Naive thymus-derived CD4-positive, alpha-beta T cell (primary cell): ENCODE measurements at regions of chr11 and their contacts with region 1.

Region 1: DNA sequence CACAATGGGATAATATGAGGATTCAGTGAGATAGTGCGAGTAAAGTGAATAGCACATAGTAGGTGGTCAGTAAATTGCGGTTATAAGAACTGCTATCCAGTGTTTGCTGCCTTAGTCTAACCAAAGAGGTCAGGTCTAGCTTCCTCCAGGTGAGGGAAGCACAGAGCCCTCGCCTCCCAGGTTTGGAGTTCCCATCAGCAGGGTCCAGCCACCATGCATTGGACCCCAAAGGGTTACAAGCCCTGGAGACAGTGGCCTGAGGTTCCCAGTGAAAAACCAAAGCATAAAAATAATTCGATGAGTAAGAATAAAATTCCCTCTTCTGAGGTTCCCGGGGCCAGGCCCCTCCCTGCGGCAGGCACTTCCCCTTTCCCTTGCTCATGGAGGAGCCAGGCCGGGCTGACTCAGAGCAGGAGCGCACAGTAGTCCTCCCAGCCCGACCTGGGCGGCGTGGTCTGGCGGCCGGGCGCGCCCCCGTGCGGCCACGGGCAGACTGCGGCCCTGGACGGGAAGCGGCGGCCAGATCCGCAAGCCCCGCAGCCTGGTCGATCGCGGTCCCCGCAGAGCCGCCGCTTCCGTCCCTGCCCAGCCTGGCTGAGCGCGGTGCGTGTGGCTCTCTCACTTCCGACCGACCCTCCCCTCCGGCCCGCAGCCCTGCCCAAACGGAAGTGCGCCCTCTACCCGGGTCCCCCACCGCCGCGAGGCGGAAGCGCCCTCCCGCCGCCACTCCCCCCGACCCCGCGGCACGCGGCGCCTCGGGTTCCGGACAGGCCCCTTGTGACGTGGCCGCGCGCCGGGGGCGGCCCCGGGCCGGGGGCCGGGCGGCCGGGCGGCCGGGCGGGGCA is at the start of gene SLC39A13:
- DNase-seq: peak; percentile 80 to 99 (median 88)
- ATAC-seq: peak; percentile 91
- H3K4me3 ChIP-seq: peak within 1 kb of the TSS; percentile 71
- H3K4me3 Mint-ChIP-seq: peak within 1 kb of the TSS; percentile 87 to 99 (median 91)
- H3K27ac ChIP-seq: peak within 1 kb of the TSS; percentile 83
- H3K27ac Mint-ChIP-seq: peak within 1 kb of the TSS; percentile 90 to 98 (median 94)
- H3K4me1 ChIP-seq: peaks cover 8 to 13% of the 10 kb centered on the region in 2 donors
- H3K4me1 Mint-ChIP-seq: peaks cover 4 to 23% (median 21%) of the 10 kb centered on the region in 7 donors
- H3K27me3 ChIP-seq: no peaks in the 10 kb centered on the region
- H3K27me3 Mint-ChIP-seq: no peaks in the 10 kb centered on the region
- total RNA-seq, gene SLC39A13: 29.9 to 60.4 (median 45.1) TPM

Region 2: GRCh38 chr11:46826310-46827044 is 581.5 kb before region 1 on chr11:
- CTCF ChIA-PET with region 1: no interaction called
- POLR2A ChIA-PET with region 1: no interaction called
- intact Hi-C with region 1: loop called in 1 of 2 experiments (anchors 5 kb)
- DNase-seq: peak; percentile 48 to 72 (median 67)
- ATAC-seq: peak; percentile 100
- H3K4me3 ChIP-seq: peak overlapping the region; percentile 45
- H3K4me3 Mint-ChIP-seq: peak overlapping the region; percentile 77 to 90 (median 83)
- H3K27ac ChIP-seq: peak overlapping the region; percentile 1
- H3K27ac Mint-ChIP-seq: peak overlapping the region in 5 of 9 donors; percentile 43 to 83 (median 64)
- H3K4me1 ChIP-seq: peaks cover 10 to 11% of the 10 kb centered on the region in 2 donors
- H3K4me1 Mint-ChIP-seq: peaks cover 12 to 49% (median 37%) of the 10 kb centered on the region in 7 donors
- H3K27me3 ChIP-seq: no peaks in the 10 kb centered on the region
- H3K27me3 Mint-ChIP-seq: no peaks in the 10 kb centered on the region

Region 3: DNA sequence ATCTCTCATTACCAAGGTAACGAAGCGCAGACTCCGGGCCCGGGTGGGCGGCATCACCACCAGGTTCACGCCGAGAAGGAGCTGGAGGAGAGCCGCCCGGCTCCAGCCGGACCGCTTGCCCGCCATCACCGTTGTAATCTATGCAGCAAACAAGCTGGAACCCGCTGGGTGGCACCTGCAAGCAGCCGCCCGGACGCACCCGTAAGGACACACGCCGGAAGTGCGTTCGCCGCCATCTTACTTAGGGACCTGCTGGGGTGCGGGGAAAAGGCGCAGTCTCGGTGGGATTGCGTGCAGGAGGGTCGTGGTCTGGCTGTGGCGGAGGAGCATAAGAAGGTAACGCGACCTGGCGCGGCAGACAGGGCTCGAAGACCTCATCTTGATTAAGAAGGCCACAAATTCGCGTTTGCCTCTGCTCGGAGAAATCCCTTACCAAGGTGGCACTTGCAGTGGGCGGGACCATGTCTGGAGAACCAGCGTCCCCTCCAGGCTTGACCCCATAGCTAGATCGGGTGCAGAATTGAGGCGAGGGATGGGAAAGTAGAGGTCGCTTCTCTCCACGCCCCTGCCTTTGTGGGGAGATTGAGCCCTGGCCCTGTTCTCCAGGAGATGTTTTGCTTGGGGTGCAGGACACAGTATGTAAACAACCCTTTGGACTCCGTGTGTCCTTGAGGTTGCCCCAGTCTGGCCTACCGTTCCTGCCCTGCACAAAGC is 159.1 kb before region 1 on chr11 and contains the start of gene ACP2:
- CTCF ChIA-PET with region 1: no interaction called
- POLR2A ChIA-PET with region 1: interaction called, 3 read pairs
- intact Hi-C with region 1: loop called in 1 of 2 experiments (anchors 1 kb)
- DNase-seq: peak; percentile 83 to 91 (median 86)
- ATAC-seq: peak; percentile 99
- H3K4me3 ChIP-seq: peak within 1 kb of the TSS; percentile 93
- H3K4me3 Mint-ChIP-seq: peak within 1 kb of the TSS; percentile 93 to 100 (median 98)
- H3K27ac ChIP-seq: peak within 1 kb of the TSS; percentile 87
- H3K27ac Mint-ChIP-seq: peak within 1 kb of the TSS; percentile 94 to 100 (median 98)
- H3K4me1 ChIP-seq: peaks cover 11 to 15% of the 10 kb centered on the region in 2 donors
- H3K4me1 Mint-ChIP-seq: peaks cover 13 to 39% (median 29%) of the 10 kb centered on the region in 7 donors
- H3K27me3 ChIP-seq: no peaks in the 10 kb centered on the region
- H3K27me3 Mint-ChIP-seq: no peaks in the 10 kb centered on the region
- total RNA-seq, gene ACP2: 17.6 to 38.1 (median 24.3) TPM

Region 4: GRCh38 chr11:47373876-47374720 is 33.9 kb before region 1 on chr11:
- CTCF ChIA-PET with region 1: interaction called, 140 read pairs
- POLR2A ChIA-PET with region 1: interaction called, 40 read pairs
- intact Hi-C with region 1: loop called (anchors 1 kb)
- DNase-seq: peak; percentile 69 to 91 (median 82)
- ATAC-seq: peak; percentile 84
- H3K4me3 ChIP-seq: no peak overlapping the region
- H3K4me3 Mint-ChIP-seq: peak overlapping the region in 1 of 10 donors; percentile 51
- H3K27ac ChIP-seq: no peak overlapping the region
- H3K27ac Mint-ChIP-seq: peak overlapping the region in 3 of 9 donors; percentile 48 to 72 (median 65)
- H3K4me1 ChIP-seq: peaks cover 0 to 3% of the 10 kb centered on the region in 2 donors
- H3K4me1 Mint-ChIP-seq: peaks cover 5 to 18% (median 9%) of the 10 kb centered on the region in 7 donors
- H3K27me3 ChIP-seq: no peaks in the 10 kb centered on the region
- H3K27me3 Mint-ChIP-seq: no peaks in the 10 kb centered on the region

Region 5: GRCh38 chr11:47454180-47454644 is 46.2 kb after region 1 on chr11:
- CTCF ChIA-PET with region 1: interaction called, 5 read pairs
- POLR2A ChIA-PET with region 1: no interaction called
- intact Hi-C with region 1: loop called in 1 of 2 experiments (anchors 1 kb)
- DNase-seq: peak in 8 of 9 donors; percentile 51 to 76 (median 68)
- ATAC-seq: peak; percentile 99
- H3K4me3 ChIP-seq: no peak overlapping the region
- H3K4me3 Mint-ChIP-seq: peak overlapping the region in 1 of 10 donors; percentile 41
- H3K27ac ChIP-seq: no peak overlapping the region
- H3K27ac Mint-ChIP-seq: peak overlapping the region in 6 of 9 donors; percentile 16 to 49 (median 44)
- H3K4me1 ChIP-seq: no peaks in the 10 kb centered on the region
- H3K4me1 Mint-ChIP-seq: peaks cover 0 to 7% (median 4%) of the 10 kb centered on the region in 7 donors
- H3K27me3 ChIP-seq: no peaks in the 10 kb centered on the region
- H3K27me3 Mint-ChIP-seq: no peaks in the 10 kb centered on the region

Region 6: GRCh38 chr11:47538741-47539574 is 131.0 kb after region 1 on chr11:
- CTCF ChIA-PET with region 1: no interaction called
- POLR2A ChIA-PET with region 1: no interaction called
- intact Hi-C with region 1: no loop called
- DNase-seq: no peak
- ATAC-seq: no peak
- H3K4me3 ChIP-seq: no peak overlapping the region
- H3K4me3 Mint-ChIP-seq: peak overlapping the region in 7 of 10 donors; percentile 6 to 77 (median 40)
- H3K27ac ChIP-seq: no peak overlapping the region
- H3K27ac Mint-ChIP-seq: peak overlapping the region in 8 of 9 donors; percentile 40 to 78 (median 54)
- H3K4me1 ChIP-seq: peaks cover 19 to 32% of the 10 kb centered on the region in 2 donors
- H3K4me1 Mint-ChIP-seq: peaks cover 33 to 88% (median 71%) of the 10 kb centered on the region in 7 donors
- H3K27me3 ChIP-seq: no peaks in the 10 kb centered on the region
- H3K27me3 Mint-ChIP-seq: no peaks in the 10 kb centered on the region